ENCODE measurements at regions of chr1 and their contacts with region 1.

Region 1: DNA sequence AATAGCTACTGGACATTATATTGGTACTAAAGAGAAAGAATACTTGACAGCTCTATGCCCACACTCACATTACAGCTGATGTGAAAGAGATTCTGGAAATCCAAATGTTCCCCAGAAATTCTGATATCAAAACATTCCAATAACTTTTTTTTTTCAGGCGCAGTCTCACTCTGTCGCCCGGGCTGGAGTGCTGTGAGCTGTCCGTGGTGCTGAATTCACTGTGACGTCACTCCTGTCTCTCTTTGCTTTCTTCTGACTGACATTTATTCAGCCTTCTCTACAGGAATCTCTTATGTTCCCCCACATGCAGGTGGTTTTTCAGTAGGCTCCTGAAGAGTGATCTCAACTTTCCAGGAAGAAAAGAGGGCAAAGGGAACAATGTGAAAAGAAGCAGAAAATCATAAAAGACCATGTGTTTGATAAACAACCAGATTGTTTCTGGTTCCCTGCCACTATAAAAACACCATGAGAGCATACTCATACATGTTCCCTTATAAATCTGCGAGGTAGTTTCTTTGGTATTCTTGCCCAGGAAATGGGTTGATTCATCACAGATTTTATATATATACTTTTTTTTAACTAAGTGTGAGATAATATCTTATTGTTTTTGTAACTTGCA is 6.2 kb downstream of the S100A7A start:
- DNase-seq: peak; percentile 81
- H3K4me3 Mint-ChIP-seq: no peak overlapping the region
- H3K27ac Mint-ChIP-seq: no peak overlapping the region
- H3K4me1 Mint-ChIP-seq: no peaks in the 10 kb centered on the region
- H3K27me3 Mint-ChIP-seq: peaks cover 82% of the 10 kb centered on the region
- CTCF ChIP-seq: no peak

Region 2: GRCh38 chr1:153343020-153343681 is 79.4 kb before region 1 on chr1:
- CTCF ChIA-PET with region 1: no interaction called
- intact Hi-C with region 1: no loop called
- DNase-seq: no peak
- H3K4me3 Mint-ChIP-seq: no peak overlapping the region
- H3K27ac Mint-ChIP-seq: no peak overlapping the region
- H3K4me1 Mint-ChIP-seq: peaks cover 35% of the 10 kb centered on the region
- H3K27me3 Mint-ChIP-seq: peaks cover 95% of the 10 kb centered on the region
- CTCF ChIP-seq: no peak

Region 3: GRCh38 chr1:153355468-153356071 is 67.0 kb before region 1 on chr1:
- CTCF ChIA-PET with region 1: no interaction called
- intact Hi-C with region 1: no loop called
- DNase-seq: peak; percentile 76
- H3K4me3 Mint-ChIP-seq: no peak overlapping the region
- H3K27ac Mint-ChIP-seq: no peak overlapping the region
- H3K4me1 Mint-ChIP-seq: peaks cover 34% of the 10 kb centered on the region
- H3K27me3 Mint-ChIP-seq: peaks cover 36% of the 10 kb centered on the region
- CTCF ChIP-seq: peak; percentile 54

Region 4: DNA sequence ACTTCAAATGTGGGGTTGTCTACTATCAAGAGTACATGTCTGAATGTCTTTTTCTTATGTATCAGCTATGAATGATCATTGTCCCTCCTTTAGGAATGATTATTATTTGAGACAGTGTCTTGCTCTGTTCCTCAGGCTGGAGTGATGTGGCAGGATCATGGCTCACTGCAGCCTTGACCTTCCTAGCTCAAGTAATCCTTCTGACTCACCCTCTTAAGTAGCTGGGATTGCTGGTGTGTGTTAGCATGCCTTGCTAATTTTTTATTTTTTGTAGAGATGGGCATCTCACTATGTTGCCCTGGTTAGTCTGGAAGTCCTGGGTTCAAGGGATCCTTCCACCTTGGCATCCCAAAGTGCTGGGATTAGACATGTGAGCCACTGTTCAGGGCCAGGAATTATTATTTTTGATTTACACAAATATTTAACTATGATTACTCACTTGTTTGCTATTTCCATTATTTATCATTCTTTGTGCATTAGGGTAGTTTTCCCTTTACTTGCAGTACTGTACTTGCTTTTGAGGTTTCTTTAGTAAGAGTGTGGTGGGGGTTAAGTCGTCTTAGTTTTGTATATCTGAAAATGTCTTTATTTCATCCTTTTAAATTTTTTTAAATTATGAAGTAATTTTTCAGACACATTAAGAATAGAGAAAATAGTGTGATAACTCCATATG is 25.1 kb after region 1 on chr1:
- CTCF ChIA-PET with region 1: no interaction called
- intact Hi-C with region 1: loop called (anchors 2 kb)
- DNase-seq: no peak
- H3K4me3 Mint-ChIP-seq: no peak overlapping the region
- H3K27ac Mint-ChIP-seq: no peak overlapping the region
- H3K4me1 Mint-ChIP-seq: no peaks in the 10 kb centered on the region
- H3K27me3 Mint-ChIP-seq: peaks cover 73% of the 10 kb centered on the region
- CTCF ChIP-seq: no peak